Activated CD4-positive, alpha-beta memory T cell treated with anti-CD3 and anti-CD28 coated beads for 36 hours (primary cell): ENCODE measurements at regions of chr2 and their contacts with region 1.

Region 1: DNA sequence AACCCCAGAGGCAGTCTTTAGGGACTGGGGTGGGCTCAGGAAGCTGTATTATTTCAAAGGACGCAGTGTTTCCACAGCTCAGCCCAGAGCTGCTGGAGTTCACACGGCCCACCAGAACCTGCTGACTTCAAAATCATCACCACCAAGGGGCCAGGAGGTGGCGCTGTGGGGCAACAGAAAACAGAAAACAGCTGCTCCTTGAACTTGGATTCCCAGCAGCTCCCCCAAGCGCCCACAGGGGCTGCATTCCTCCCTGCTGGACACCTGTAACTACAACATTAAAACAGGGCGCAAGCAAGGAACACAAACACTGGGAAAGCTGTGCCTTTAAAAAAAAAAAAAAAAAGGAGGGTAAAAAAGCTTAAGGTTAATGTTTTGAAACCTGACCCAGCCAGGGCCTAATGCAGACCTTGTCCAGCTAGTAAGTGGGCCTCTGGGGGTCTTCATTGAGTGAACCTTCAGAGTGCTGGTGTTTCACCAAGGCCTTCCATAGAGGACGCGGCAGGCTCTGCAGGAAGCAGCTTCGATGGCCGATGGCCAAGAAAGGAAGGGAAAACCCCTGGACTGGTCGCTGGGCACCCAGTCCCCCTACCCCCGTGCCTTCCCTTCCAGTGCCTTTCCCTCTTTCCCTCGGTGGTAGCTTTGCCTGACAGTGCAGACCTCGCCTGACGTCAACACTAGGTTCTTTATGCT is 25.9 kb downstream of the MLPH start:
- DNase-seq: peak; percentile 87
- H3K4me3 Mint-ChIP-seq: no peak overlapping the region
- H3K27ac Mint-ChIP-seq: no peak overlapping the region
- H3K4me1 Mint-ChIP-seq: no peaks in the 10 kb centered on the region
- H3K27me3 Mint-ChIP-seq: peaks cover 6% of the 10 kb centered on the region

Region 2: GRCh38 chr2:237154082-237154638 is 358.8 kb before region 1 on chr2:
- CTCF ChIA-PET with region 1: interaction called, 25 read pairs
- POLR2A ChIA-PET with region 1: no interaction called
- intact Hi-C with region 1: loop called (anchors 2 kb)
- DNase-seq: peak; percentile 76
- H3K4me3 Mint-ChIP-seq: no peak overlapping the region
- H3K27ac Mint-ChIP-seq: no peak overlapping the region
- H3K4me1 Mint-ChIP-seq: peaks cover 44% of the 10 kb centered on the region
- H3K27me3 Mint-ChIP-seq: peaks cover 4% of the 10 kb centered on the region

Region 3: GRCh38 chr2:237406371-237406895 is 106.5 kb before region 1 on chr2:
- CTCF ChIA-PET with region 1: no interaction called
- POLR2A ChIA-PET with region 1: no interaction called
- intact Hi-C with region 1: no loop called
- DNase-seq: no peak
- H3K4me3 Mint-ChIP-seq: no peak overlapping the region
- H3K27ac Mint-ChIP-seq: no peak overlapping the region
- H3K4me1 Mint-ChIP-seq: no peaks in the 10 kb centered on the region
- H3K27me3 Mint-ChIP-seq: no peaks in the 10 kb centered on the region

Region 4: GRCh38 chr2:237500681-237501424 is 12.1 kb before region 1 on chr2:
- CTCF ChIA-PET with region 1: interaction called, 18 read pairs
- POLR2A ChIA-PET with region 1: no interaction called
- intact Hi-C with region 1: no loop called
- DNase-seq: no peak
- H3K4me3 Mint-ChIP-seq: no peak overlapping the region
- H3K27ac Mint-ChIP-seq: no peak overlapping the region
- H3K4me1 Mint-ChIP-seq: no peaks in the 10 kb centered on the region
- H3K27me3 Mint-ChIP-seq: peaks cover 36% of the 10 kb centered on the region

Region 5: GRCh38 chr2:237529452-237530402 is 16.8 kb after region 1 on chr2:
- CTCF ChIA-PET with region 1: interaction called, 13 read pairs
- POLR2A ChIA-PET with region 1: no interaction called
- intact Hi-C with region 1: no loop called
- DNase-seq: no peak
- H3K4me3 Mint-ChIP-seq: no peak overlapping the region
- H3K27ac Mint-ChIP-seq: no peak overlapping the region
- H3K4me1 Mint-ChIP-seq: no peaks in the 10 kb centered on the region
- H3K27me3 Mint-ChIP-seq: no peaks in the 10 kb centered on the region

Region 6: DNA sequence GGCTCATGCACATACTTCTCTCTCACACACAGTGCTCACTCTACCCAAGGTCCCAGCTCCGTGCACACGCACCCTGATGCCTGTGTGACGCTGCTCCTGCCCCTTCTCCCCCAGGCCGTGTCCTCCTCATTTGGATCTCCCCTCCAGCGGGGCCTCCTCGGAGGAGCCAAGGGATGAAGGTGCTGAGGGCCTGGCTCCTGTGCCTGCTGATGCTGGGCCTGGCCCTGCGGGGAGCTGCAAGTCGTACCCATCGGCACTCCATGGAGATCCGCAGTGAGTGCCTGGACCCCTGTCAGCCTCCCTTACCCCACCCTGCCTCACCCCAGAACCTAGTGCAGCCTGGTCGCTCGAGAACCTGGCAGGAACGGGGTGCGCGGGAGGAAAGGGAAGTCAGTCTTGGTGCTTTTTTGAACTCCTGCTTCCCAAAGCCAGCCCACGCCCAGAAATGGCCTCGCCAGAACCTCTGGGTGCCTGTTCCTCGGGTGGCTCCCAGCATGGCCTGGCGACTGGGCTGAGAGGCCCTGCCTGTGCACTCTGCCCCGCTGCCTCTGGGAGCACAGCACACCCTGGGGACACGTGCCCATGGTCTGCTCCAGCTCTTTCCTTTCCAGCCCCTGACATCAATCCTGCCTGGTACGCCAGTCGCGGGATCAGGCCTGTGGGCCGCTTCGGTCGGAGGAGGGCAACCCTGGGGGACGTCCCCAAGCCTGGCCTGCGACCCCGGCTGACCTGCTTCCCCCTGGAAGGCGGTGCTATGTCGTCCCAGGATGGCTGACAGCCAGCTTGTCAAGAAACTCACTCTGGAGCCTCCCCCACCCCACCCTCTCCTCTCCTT is 53.7 kb after region 1 on chr2 and contains the start of gene PRLH:
- CTCF ChIA-PET with region 1: interaction called, 399 read pairs
- POLR2A ChIA-PET with region 1: interaction called, 3 read pairs
- intact Hi-C with region 1: no loop called
- DNase-seq: no peak
- H3K4me3 Mint-ChIP-seq: no peak within 1 kb of the TSS
- H3K27ac Mint-ChIP-seq: no peak within 1 kb of the TSS
- H3K4me1 Mint-ChIP-seq: no peaks in the 10 kb centered on the region
- H3K27me3 Mint-ChIP-seq: peaks cover 12% of the 10 kb centered on the region
- total RNA-seq, gene PRLH: not detected

Region 7: DNA sequence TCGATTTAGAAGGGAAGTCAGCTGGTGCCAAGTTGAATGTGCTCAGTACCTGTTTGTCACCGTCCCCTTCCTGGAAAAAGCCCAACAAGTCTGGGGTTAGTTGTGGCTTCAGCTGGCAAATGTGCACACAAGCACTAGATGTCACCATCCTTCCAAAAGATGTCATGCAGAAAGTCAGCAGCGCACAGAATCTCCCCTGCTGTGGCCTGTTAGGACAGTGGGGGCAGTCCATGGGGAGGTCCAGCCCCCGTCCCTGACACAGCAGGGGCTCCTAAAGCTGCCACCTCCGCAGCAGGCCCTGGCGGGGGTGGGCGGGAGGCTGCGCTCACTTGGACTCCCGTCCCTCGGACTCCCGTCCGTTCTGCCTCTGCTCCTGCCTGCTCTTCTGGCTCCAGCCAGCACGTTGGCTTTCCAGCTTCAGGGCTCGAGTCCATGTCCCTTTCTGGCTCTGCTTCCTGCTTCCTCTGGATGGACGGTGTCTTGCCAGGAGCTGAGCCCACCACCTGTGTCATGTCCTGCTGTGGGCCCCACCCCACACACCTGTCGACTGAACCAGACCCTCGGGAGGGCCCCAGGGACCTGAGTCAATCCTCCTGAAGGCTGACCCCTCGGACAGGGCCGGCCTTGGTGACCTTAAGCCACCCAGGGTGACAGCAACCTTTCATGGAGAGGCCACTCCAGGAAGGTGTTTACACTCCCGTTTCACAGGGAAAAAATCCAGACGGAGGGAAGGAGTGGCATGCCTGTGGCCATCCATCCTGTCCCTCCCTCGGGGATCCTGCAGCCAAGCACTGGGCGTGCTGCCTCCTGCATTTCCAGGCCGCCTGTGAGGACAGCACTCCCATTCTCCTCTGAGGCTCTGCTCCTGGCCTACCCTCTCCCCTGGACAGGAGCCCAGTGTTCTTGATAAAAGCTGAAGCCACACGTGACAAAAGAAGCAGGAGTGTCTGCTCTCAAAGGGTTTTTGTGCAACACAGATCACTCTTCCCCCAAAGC is 69.1 kb after region 1 on chr2:
- CTCF ChIA-PET with region 1: interaction called, 399 read pairs
- POLR2A ChIA-PET with region 1: no interaction called
- intact Hi-C with region 1: no loop called
- DNase-seq: peak; percentile 80
- H3K4me3 Mint-ChIP-seq: no peak overlapping the region
- H3K27ac Mint-ChIP-seq: no peak overlapping the region
- H3K4me1 Mint-ChIP-seq: peaks cover 5% of the 10 kb centered on the region
- H3K27me3 Mint-ChIP-seq: no peaks in the 10 kb centered on the region

Region 8: GRCh38 chr2:237744613-237745249 is 231.8 kb after region 1 on chr2:
- CTCF ChIA-PET with region 1: interaction called, 27 read pairs
- POLR2A ChIA-PET with region 1: no interaction called
- intact Hi-C with region 1: no loop called
- DNase-seq: peak; percentile 86
- H3K4me3 Mint-ChIP-seq: no peak overlapping the region
- H3K27ac Mint-ChIP-seq: peak overlapping the region; percentile 76
- H3K4me1 Mint-ChIP-seq: peaks cover 39% of the 10 kb centered on the region
- H3K27me3 Mint-ChIP-seq: no peaks in the 10 kb centered on the region